H1 (cell line): ENCODE measurements at regions of chr18 and their contacts with region 1.

Region 1: GRCh38 chr18:63131106-63131958 is 188.2 kb downstream of the BCL2 start:
- DNase-seq: no peak
- H3K4me3 ChIP-seq: no peak overlapping the region
- H3K27ac ChIP-seq: no peak overlapping the region
- H3K4me1 ChIP-seq: peaks cover 0 to 3% (median 0%) of the 10 kb centered on the region in 4 experiments; a peak in 2 of 7 replicates
- H3K27me3 ChIP-seq: no peaks in the 10 kb centered on the region
- CTCF ChIP-seq: peak; percentile 29 to 71 (median 54)
- EP300 ChIP-seq: no peak
- POLR2A ChIP-seq: no peak
- RAD21 ChIP-seq: peak; percentile 57 to 62

Region 2: DNA sequence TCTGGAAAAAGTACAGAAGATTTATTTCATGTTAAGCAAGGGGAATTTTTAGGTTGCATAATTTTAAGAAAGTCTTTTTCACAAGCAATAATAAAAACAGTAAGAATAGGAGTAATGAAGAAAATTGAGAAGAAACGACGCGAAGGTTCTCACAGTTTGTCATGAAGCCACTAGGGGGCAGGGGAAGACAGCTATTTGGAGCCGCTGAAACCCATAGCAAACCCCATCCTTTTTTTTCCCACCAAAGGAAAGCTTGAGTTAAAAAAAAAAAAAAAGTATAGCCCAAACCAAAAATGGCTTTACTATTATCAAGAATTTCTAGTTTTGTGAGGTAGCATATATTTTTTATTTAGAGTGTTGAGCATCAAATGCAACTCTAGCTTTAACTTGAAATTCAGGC is 115.1 kb before region 1 on chr18:
- CTCF ChIA-PET with region 1: interaction called, 13 read pairs
- POLR2A ChIA-PET with region 1: no interaction called
- DNase-seq: peak in 1 of 2 experiments; percentile 50
- H3K4me3 ChIP-seq: no peak overlapping the region
- H3K27ac ChIP-seq: no peak overlapping the region
- H3K4me1 ChIP-seq: no peaks in the 10 kb centered on the region
- H3K27me3 ChIP-seq: no peaks in the 10 kb centered on the region
- CTCF ChIP-seq: peak; percentile 44 to 76 (median 74)
- EP300 ChIP-seq: no peak
- POLR2A ChIP-seq: no peak
- RAD21 ChIP-seq: peak; percentile 89 to 93

Region 3: GRCh38 chr18:63119647-63120046 is 11.7 kb before region 1 on chr18:
- CTCF ChIA-PET with region 1: interaction called, 36 read pairs
- POLR2A ChIA-PET with region 1: no interaction called
- DNase-seq: peak in 1 of 2 experiments; percentile 3
- H3K4me3 ChIP-seq: no peak overlapping the region
- H3K27ac ChIP-seq: no peak overlapping the region
- H3K4me1 ChIP-seq: no peaks in the 10 kb centered on the region
- H3K27me3 ChIP-seq: no peaks in the 10 kb centered on the region
- CTCF ChIP-seq: peak; percentile 62 to 71 (median 69)
- EP300 ChIP-seq: no peak
- POLR2A ChIP-seq: no peak
- RAD21 ChIP-seq: peak; percentile 71 to 79

Region 4: GRCh38 chr18:63155169-63155852 is 24.0 kb after region 1 on chr18:
- CTCF ChIA-PET with region 1: interaction called, 49 read pairs
- POLR2A ChIA-PET with region 1: no interaction called
- DNase-seq: peak; percentile 50 to 95
- H3K4me3 ChIP-seq: no peak overlapping the region
- H3K27ac ChIP-seq: no peak overlapping the region
- H3K4me1 ChIP-seq: peaks cover 0 to 3% (median 3%) of the 10 kb centered on the region in 4 experiments; a peak in 4 of 7 replicates
- H3K27me3 ChIP-seq: no peaks in the 10 kb centered on the region; a peak in 1 of 7 replicates
- CTCF ChIP-seq: peak; percentile 94 to 96 (median 96)
- EP300 ChIP-seq: no peak
- POLR2A ChIP-seq: no peak
- RAD21 ChIP-seq: peak; percentile 82 to 89

Region 5: DNA sequence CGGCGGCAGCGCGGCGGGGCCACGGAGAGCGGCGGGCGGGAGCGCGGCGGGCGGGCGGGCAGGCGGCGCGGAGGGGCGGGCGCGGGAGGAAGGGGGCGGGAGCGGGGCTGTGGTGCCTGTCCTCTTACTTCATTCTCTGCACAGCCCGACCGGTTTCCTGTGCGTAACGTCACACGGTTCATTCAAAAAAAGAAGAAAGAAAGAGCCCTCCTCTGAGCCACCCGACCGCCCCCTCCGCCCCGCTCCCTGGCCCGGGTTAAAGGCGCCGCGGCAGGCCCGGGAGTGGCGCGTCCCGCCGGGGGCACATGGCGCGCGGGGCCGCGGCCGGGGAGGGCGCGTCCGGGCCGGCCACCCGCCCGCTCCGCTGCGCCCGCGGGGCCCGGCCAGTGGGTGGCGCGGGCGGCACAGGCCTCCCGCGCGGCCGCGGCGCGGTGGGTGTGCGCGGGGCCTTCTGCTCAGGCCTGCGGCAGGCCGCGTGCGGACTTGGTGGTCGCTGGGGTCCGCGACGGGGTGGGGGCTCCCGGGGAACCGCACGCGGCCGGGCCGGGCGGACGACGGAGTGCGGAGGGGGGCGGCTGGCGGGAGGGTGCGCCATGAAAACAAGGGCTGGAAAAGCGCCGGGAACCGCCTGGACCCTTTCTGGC is 188.8 kb after region 1 on chr18:
- CTCF ChIA-PET with region 1: interaction called, 24 read pairs
- POLR2A ChIA-PET with region 1: no interaction called
- DNase-seq: peak in 1 of 2 experiments; percentile 63
- H3K4me3 ChIP-seq: peak overlapping the region; percentile 43 to 77 (median 62)
- H3K27ac ChIP-seq: no peak overlapping the region
- H3K4me1 ChIP-seq: peaks cover 4 to 10% (median 8%) of the 10 kb centered on the region in 4 experiments; a peak in 4 of 7 replicates
- H3K27me3 ChIP-seq: peaks cover 0 to 37% (median 22%) of the 10 kb centered on the region in 4 experiments; a peak in 6 of 7 replicates
- CTCF ChIP-seq: no peak
- EP300 ChIP-seq: no peak
- POLR2A ChIP-seq: no peak
- RAD21 ChIP-seq: no peak